ENCODE measurements at regions of chr14 and their contacts with region 1.

Region 1: DNA sequence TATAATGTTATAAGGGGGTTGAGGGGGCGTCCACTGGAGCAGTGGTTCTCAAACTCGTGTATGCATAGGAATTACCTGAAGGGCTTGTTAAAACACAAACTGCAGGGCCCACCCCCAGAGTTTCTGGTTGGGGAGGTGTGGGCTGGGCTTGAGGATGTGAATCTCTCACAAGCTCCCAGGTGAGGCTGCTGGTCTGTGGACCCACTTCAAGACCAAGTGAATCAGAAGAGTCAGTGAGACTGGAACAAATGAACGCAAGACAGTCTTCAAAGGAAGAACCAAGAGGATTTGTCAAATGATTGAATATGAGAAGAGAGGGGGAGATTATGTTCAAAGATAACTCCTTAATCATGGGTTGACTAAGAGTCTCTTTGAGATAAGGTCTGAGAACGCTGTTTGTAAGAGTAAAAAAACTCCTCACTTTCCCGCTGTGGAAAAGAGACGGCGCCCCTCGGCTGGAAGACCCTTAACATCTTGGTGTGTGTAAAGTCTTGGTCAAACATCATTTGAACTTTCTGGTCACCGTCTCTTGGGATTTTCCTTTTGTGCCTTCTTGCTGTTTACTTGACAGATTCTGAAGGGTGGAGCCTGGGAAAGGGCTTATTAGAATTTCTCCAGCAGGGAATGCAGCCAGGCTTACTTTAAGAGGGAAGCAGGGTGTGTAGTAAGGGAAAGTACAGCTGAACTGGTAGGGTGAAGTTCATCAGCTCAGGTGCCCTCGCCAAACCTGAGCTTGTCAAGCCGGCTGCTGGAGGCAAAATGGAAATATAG is 5.3 kb upstream of the FOXN3 start:
- DNase-seq: peak; percentile 68
- ATAC-seq: peak; percentile 47
- H3K4me3 Mint-ChIP-seq: peak overlapping the region; percentile 11
- H3K27ac Mint-ChIP-seq: peak overlapping the region; percentile 75
- H3K4me1 Mint-ChIP-seq: peaks cover 79% of the 10 kb centered on the region
- H3K27me3 Mint-ChIP-seq: no peaks in the 10 kb centered on the region
- CTCF ChIP-seq: no peak

Region 2: DNA sequence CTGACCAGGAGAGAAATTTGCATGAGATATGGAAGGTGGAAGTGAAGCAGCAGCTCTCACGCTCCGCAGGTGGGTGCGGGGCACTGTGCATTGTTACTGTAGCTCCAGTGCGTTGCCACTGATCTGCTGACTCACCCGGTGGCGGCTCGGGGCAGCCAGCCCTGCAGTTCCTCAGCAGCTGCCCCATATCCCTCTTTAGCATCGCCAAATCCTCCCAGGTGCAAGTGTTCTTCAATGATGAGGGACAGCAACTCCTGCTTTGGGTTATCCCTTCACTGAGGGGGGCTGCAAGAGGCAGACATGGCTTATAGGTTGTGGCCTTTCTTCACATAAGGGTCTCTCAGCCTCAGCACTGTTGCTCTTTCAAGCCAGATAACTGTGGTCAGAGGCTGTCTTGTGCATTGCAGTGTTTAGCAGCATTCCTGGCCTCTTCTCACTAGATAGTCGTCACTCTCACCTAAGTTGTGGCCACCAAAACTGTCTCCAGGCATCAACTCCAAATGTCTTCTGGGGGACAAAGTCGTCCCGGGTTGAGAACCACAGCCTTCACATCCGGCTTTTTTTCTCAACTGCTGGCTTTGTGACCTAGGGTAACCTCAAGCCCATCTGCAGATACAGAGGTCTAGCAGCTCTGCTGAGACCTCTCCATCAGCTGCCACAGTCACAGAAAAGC is 351.4 kb after region 1 on chr14:
- CTCF ChIA-PET with region 1: interaction called, 4 read pairs
- POLR2A ChIA-PET with region 1: no interaction called
- intact Hi-C with region 1: loop called (anchors 5 kb)
- DNase-seq: peak; percentile 80
- ATAC-seq: peak; percentile 86
- H3K4me3 Mint-ChIP-seq: peak overlapping the region; percentile 57
- H3K27ac Mint-ChIP-seq: peak overlapping the region; percentile 70
- H3K4me1 Mint-ChIP-seq: peaks cover 29% of the 10 kb centered on the region
- H3K27me3 Mint-ChIP-seq: no peaks in the 10 kb centered on the region
- CTCF ChIP-seq: no peak